ENCODE measurements at regions of chr4 and their contacts with region 1.

Region 1: DNA sequence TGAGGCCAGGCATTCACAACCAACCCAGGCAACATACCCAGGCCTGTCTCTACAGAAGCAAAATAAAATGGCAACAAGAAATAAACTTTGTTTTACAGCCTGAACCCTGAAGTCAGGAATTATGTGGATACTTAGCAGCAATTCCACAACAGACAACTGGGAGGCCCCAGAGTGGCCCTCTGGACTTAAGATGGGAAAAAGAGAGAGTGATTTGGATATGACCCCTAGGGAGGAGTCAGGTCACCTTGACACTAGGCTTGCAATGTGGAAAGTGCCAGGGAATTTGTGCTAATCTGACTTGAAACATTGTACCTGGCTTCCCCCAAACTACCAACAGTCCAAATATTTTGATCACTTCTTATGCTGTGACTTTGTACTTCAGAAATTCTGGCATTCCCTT is 193.1 kb downstream of the PARM1 start:
- DNase-seq: no peak
- ATAC-seq: no peak
- H3K4me3 ChIP-seq: no peak overlapping the region
- H3K27ac ChIP-seq: no peak overlapping the region
- H3K4me1 ChIP-seq: no peaks in the 10 kb centered on the region
- H3K27me3 ChIP-seq: no peaks in the 10 kb centered on the region
- CTCF ChIP-seq: no peak

Region 2: GRCh38 chr4:73593631-73594241 is 1532.3 kb before region 1 on chr4:
- intact Hi-C with region 1: loop called in 1 of 10 experiments (anchors 10 kb)
- DNase-seq: no peak
- ATAC-seq: no peak
- H3K4me3 ChIP-seq: no peak overlapping the region
- H3K27ac ChIP-seq: no peak overlapping the region
- H3K4me1 ChIP-seq: no peaks in the 10 kb centered on the region
- H3K27me3 ChIP-seq: no peaks in the 10 kb centered on the region
- CTCF ChIP-seq: peak in 7 of 9 donors; percentile 39 to 61 (median 52)